Natural killer cell (primary cell): ENCODE measurements at regions of chr11 and their contacts with region 1.

Region 1: GRCh38 chr11:69296890-69297786 is 3.2 kb downstream of the MYEOV start:
- DNase-seq: peak; percentile 89 to 92
- ATAC-seq: peak; percentile 62 to 80 (median 76)
- H3K4me3 ChIP-seq: peak overlapping the region; percentile 22
- H3K4me3 Mint-ChIP-seq: peak overlapping the region; percentile 87
- H3K27ac ChIP-seq: peak overlapping the region; percentile 76
- H3K27ac Mint-ChIP-seq: peak overlapping the region; percentile 94 to 96
- H3K4me1 ChIP-seq: peaks cover 75% of the 10 kb centered on the region
- H3K4me1 Mint-ChIP-seq: peaks cover 39 to 86% of the 10 kb centered on the region in 2 donors
- H3K27me3 ChIP-seq: no peaks in the 10 kb centered on the region
- H3K27me3 Mint-ChIP-seq: peaks cover 0 to 5% of the 10 kb centered on the region in 2 donors
- CTCF ChIP-seq: no peak

Region 2: GRCh38 chr11:69000831-69001242 is 296.3 kb before region 1 on chr11:
- intact Hi-C with region 1: loop called (anchors 1 kb)
- DNase-seq: no peak
- ATAC-seq: no peak
- H3K4me3 ChIP-seq: no peak overlapping the region
- H3K4me3 Mint-ChIP-seq: no peak overlapping the region
- H3K27ac ChIP-seq: no peak overlapping the region
- H3K27ac Mint-ChIP-seq: peak overlapping the region in 1 of 2 donors; percentile 89
- H3K4me1 ChIP-seq: peaks cover 25% of the 10 kb centered on the region
- H3K4me1 Mint-ChIP-seq: peaks cover 20 to 29% of the 10 kb centered on the region in 2 donors
- H3K27me3 ChIP-seq: no peaks in the 10 kb centered on the region
- H3K27me3 Mint-ChIP-seq: peaks cover 10% of the 10 kb centered on the region in 2 donors
- CTCF ChIP-seq: no peak

Region 3: GRCh38 chr11:69249311-69250185 is 47.6 kb before region 1 on chr11:
- intact Hi-C with region 1: no loop called
- DNase-seq: no peak
- ATAC-seq: no peak
- H3K4me3 ChIP-seq: no peak overlapping the region
- H3K4me3 Mint-ChIP-seq: no peak overlapping the region
- H3K27ac ChIP-seq: no peak overlapping the region
- H3K27ac Mint-ChIP-seq: no peak overlapping the region
- H3K4me1 ChIP-seq: no peaks in the 10 kb centered on the region
- H3K4me1 Mint-ChIP-seq: no peaks in the 10 kb centered on the region
- H3K27me3 ChIP-seq: no peaks in the 10 kb centered on the region
- H3K27me3 Mint-ChIP-seq: peaks cover 12 to 15% of the 10 kb centered on the region in 2 donors
- CTCF ChIP-seq: no peak

Region 4: DNA sequence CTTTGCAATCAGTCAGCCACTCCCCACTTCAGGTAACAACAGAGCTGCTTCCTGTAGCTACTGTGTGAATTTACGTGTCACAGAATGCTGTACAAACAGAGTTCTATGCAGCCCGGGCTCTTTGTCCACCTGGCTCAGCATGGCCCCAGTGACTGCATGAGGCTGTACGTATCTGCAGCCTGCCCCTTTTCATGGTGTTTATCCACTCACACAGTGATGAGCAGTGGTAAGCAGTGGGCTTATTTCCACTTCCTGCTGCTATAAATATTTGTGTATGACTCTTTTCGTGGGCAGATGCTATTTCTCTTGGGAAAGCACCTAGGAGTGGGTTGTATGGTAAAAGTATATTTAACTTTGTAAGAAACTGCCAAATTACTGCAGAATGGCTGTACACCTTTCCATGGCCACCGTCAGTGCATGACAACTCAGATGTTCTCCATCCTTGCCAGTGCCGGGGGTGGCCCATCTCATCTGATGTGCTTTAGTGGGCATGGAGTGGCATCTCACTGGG is 40.1 kb after region 1 on chr11:
- intact Hi-C with region 1: loop called (anchors 1 kb)
- DNase-seq: peak in 1 of 2 donors; percentile 58
- ATAC-seq: peak; percentile 50 to 85 (median 79)
- H3K4me3 ChIP-seq: no peak overlapping the region
- H3K4me3 Mint-ChIP-seq: no peak overlapping the region
- H3K27ac ChIP-seq: no peak overlapping the region
- H3K27ac Mint-ChIP-seq: peak overlapping the region in 1 of 2 donors; percentile 36
- H3K4me1 ChIP-seq: peaks cover 13% of the 10 kb centered on the region
- H3K4me1 Mint-ChIP-seq: peaks cover 16 to 21% of the 10 kb centered on the region in 2 donors
- H3K27me3 ChIP-seq: no peaks in the 10 kb centered on the region
- H3K27me3 Mint-ChIP-seq: peaks cover 3 to 16% of the 10 kb centered on the region in 2 donors
- CTCF ChIP-seq: no peak

Region 5: GRCh38 chr11:69427337-69427736 is 130.2 kb after region 1 on chr11:
- intact Hi-C with region 1: loop called (anchors 10 kb)
- DNase-seq: no peak
- ATAC-seq: no peak
- H3K4me3 ChIP-seq: no peak overlapping the region
- H3K4me3 Mint-ChIP-seq: no peak overlapping the region
- H3K27ac ChIP-seq: no peak overlapping the region
- H3K27ac Mint-ChIP-seq: no peak overlapping the region
- H3K4me1 ChIP-seq: peaks cover 24% of the 10 kb centered on the region
- H3K4me1 Mint-ChIP-seq: peaks cover 16 to 22% of the 10 kb centered on the region in 2 donors
- H3K27me3 ChIP-seq: peaks cover 12% of the 10 kb centered on the region
- H3K27me3 Mint-ChIP-seq: peaks cover 6 to 16% of the 10 kb centered on the region in 2 donors
- CTCF ChIP-seq: no peak

Region 6: DNA sequence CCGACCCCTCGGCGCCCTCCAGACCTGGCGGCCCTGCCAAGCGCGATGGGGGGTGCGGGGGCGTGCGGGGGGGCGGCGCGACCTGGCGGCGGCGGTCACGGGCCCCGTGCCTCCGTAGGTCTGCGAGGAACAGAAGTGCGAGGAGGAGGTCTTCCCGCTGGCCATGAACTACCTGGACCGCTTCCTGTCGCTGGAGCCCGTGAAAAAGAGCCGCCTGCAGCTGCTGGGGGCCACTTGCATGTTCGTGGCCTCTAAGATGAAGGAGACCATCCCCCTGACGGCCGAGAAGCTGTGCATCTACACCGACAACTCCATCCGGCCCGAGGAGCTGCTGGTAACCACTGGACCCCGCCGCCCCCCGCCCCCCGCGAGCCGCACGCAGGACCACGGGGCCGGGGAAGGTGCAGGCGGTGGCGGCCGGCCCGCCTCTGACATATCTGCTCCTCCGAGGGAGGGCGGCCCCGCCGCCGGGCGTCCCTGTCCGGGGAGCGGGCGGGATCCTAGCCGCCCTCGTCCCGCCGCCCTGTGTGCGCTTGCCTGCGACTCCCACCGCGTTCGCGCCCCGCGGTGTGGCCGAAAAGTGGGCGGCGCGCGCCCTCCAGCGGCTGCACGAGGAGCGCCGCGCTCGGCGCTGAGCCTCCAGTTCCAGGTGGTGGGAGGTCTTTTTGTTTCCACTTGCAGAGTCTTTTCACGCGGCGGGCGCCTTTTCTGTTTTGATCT is 345.9 kb after region 1 on chr11:
- intact Hi-C with region 1: loop called (anchors 1 kb)
- DNase-seq: peak; percentile 82 to 89
- ATAC-seq: peak; percentile 79 to 88 (median 87)
- H3K4me3 ChIP-seq: peak overlapping the region; percentile 71
- H3K4me3 Mint-ChIP-seq: peak overlapping the region; percentile 80
- H3K27ac ChIP-seq: no peak overlapping the region
- H3K27ac Mint-ChIP-seq: peak overlapping the region in 1 of 2 donors; percentile 42
- H3K4me1 ChIP-seq: peaks cover 40% of the 10 kb centered on the region
- H3K4me1 Mint-ChIP-seq: peaks cover 9 to 21% of the 10 kb centered on the region in 2 donors
- H3K27me3 ChIP-seq: peaks cover 31% of the 10 kb centered on the region
- H3K27me3 Mint-ChIP-seq: peaks cover 19 to 26% of the 10 kb centered on the region in 2 donors
- CTCF ChIP-seq: peak; percentile 96

Region 7: DNA sequence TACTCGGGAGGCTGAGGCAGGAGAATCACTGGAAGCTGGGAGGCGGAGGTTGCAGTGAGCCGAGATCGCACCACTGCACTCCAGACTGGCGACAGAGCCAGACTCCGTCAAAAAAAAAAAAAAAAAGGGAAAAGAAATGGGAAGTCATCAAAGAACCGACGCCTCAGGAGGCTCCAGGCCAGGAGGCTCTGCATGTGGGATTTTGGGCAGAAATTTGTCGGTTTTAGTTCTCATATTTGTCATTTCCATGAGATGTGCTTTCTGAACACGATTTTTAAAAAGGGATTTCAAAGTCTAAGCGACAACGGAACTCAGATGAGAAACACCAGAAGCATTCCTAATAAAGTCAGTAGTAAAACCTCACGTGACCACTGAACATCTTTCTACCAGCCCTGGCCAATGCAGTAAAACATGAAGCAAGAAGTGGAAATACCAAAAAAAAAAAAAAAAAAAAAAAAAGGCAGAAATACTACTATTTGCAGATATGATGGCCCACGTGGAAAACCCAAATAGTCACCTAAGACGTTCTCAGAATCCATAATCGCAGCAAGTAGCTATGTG is 378.8 kb after region 1 on chr11:
- intact Hi-C with region 1: loop called (anchors 1 kb)
- DNase-seq: no peak
- ATAC-seq: no peak
- H3K4me3 ChIP-seq: peak overlapping the region; percentile 88
- H3K4me3 Mint-ChIP-seq: peak overlapping the region; percentile 97
- H3K27ac ChIP-seq: no peak overlapping the region
- H3K27ac Mint-ChIP-seq: no peak overlapping the region
- H3K4me1 ChIP-seq: peaks cover 21% of the 10 kb centered on the region
- H3K4me1 Mint-ChIP-seq: peaks cover 26 to 38% of the 10 kb centered on the region in 2 donors
- H3K27me3 ChIP-seq: no peaks in the 10 kb centered on the region
- H3K27me3 Mint-ChIP-seq: peaks cover 2 to 8% of the 10 kb centered on the region in 2 donors
- CTCF ChIP-seq: no peak